Left lung (tissue), 14 donors: ENCODE measurements at regions of chr13 and their contacts with region 1.

Region 1: GRCh38 chr13:77599351-77599750 is 63.8 kb downstream of the SCEL start:
- DNase-seq: no peak
- ATAC-seq: no peak
- H3K4me3 ChIP-seq: no peak overlapping the region
- H3K27ac ChIP-seq: no peak overlapping the region
- H3K4me1 ChIP-seq: no peaks in the 10 kb centered on the region
- H3K27me3 ChIP-seq: no peaks in the 10 kb centered on the region
- CTCF ChIP-seq: no peak

Region 2: DNA sequence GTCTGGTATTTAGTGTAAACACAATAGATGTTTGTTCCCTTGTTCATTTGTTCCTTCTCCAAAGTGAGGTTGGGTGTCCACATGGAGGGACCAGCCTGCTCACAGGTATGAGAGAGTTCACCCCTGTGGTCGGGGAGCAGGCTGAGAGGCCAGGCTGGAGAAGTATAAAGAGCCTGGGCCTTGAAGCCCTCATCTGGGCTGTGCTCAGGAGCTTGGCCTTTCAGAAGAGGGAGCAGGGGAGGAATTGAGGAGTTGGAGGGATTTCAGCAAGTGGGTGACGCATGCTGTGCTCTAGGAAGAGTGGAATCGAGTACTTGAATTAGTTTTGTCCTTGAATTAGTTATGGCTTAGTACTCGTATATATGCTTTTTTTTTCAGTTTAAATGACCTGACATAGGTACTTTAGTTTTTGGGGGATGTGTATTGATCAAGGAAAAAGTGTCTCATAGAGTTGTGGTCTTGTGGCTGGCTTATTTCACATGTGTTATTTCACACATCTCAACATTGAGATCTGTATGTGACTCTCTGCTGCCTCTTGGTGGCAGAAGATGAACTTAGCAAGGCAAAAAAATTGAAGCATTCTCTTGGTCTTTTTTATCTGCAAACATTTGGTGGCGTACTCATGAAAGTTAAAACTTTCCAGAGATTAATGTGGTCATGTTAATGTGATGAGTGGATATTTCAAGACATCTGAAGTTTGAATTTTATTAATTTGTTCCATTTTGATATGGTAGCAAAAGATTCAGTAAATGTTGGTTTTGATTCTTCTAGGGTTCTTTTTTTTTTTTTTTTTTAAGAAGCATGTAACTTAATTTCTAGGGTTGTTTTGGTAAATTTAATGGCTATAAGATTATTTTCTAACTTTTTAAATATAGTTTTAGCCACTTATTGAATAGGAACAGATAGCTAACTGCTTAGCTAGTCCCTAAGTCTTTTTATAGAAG is 152.4 kb after region 1 on chr13:
- intact Hi-C with region 1: loop called in 1 of 2 experiments (anchors 5 kb)
- DNase-seq: peak in 2 of 4 donors; percentile 48 to 63
- ATAC-seq: peak; percentile 95
- H3K4me3 ChIP-seq: no peak overlapping the region
- H3K27ac ChIP-seq: no peak overlapping the region
- H3K4me1 ChIP-seq: peaks cover 0 to 5% of the 10 kb centered on the region in 2 donors
- H3K27me3 ChIP-seq: no peaks in the 10 kb centered on the region
- CTCF ChIP-seq: peak; percentile 64 to 75